Gastrocnemius medialis (tissue), 4 donors: ENCODE measurements at regions of chr1 and their contacts with region 1.

Region 1: DNA sequence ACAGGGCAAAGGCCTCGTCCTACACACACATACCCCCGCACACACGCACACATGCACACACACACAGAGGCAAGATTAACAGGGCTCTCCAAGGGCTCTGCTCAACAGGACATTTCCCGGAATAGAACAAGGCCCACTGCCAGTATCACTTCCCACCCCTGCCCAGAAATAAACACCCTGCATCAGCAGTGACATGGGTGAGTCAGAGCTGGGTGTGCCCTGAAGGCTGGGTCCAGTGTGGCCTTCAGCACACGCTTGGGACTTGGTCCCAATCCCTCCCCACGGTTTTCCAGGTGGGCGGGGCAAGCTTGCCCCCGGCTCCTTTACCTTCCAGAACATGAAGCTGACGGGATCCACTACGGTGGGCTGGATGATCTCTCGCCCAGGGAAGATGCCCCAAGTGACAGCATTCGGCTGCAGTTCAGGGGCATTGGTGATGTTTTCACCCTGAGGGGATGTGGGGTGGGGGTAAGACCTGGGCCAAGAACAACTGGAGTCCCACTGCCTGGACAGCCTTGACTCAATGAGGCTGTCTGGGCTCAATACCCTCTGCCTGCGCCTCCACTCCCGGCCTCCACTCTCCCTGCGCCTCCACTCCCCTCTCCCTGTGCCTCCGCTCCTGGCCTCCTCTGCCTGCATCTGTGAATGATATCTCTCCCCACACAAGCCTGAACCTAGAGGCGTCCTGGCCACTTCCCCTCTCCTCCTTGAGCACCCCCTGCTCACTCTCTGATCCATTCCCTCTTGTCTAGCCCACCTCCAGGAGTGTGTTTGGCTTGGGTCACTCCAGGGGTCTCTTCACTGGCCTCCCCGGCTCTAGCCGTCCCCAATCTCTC is 14.7 kb downstream of the MTHFR start:
- DNase-seq: peak; percentile 97 to 98
- ATAC-seq: peak; percentile 83 to 96
- H3K4me3 ChIP-seq: peak overlapping the region; percentile 7 to 43 (median 12)
- H3K27ac ChIP-seq: peak overlapping the region; percentile 90 to 99 (median 97)
- H3K4me1 ChIP-seq: peaks cover 65 to 76% of the 10 kb centered on the region in 2 donors
- H3K27me3 ChIP-seq: no peaks in the 10 kb centered on the region
- CTCF ChIP-seq: no peak
- POLR2A ChIP-seq: peak; percentile 75 to 85

Region 2: GRCh38 chr1:11805447-11806306 is 14.6 kb after region 1 on chr1 and contains the starts of genes CLCN6 and MTHFR:
- in situ Hi-C with region 1: no loop called
- intact Hi-C with region 1: loop called (anchors 1 kb)
- DNase-seq: peak; percentile 100
- ATAC-seq: peak; percentile 72 to 73
- H3K4me3 ChIP-seq: peak within 1 kb of the TSS; percentile 82 to 95 (median 86)
- H3K27ac ChIP-seq: peak within 1 kb of the TSS; percentile 92 to 99 (median 96)
- H3K4me1 ChIP-seq: peaks cover 57 to 63% of the 10 kb centered on the region in 2 donors
- H3K27me3 ChIP-seq: no peaks in the 10 kb centered on the region
- CTCF ChIP-seq: peak in 1 of 5 experiments; percentile 55
- POLR2A ChIP-seq: peak; percentile 96 to 98
- total RNA-seq, gene CLCN6: 7.1 to 11.9 (median 9.5) TPM
- total RNA-seq, gene MTHFR: 10.2 to 24.7 (median 18.1) TPM

Region 3: DNA sequence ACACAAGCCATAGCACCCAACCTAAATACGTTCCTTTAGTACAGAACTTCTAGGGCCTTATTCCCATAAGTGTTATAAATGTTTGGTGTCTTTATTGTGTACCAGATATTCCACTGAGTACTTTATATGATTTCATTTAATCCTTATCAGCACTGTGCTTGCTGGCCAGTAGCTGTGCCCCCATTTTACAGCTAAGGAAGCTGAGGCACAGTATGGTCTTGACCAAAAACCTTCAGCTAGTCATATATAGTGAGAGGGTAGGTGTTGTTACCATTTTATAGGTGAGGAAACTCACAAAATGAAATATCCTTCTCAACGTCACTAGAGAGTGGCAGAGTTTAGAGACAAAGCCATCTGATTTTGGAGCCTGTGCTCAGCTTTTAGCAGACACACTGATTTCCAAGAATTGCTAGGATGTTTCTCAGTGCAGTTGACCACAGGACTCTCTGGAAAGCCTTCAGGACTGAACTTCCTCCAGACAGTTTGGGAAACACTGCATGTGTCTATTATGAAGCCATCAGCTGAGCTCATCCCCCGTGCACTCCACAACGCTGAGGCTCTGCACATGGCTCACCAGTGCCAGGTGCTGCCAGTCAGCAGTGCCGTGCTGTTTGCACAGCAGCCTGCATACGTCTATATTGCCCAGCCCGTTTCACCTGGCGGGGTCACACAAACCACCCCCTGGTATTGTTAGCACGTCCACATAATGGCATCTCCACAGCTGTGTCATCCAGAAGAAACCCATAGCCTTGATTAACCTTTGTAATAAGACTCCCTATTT is 41.0 kb after region 1 on chr1:
- in situ Hi-C with region 1: no loop called
- intact Hi-C with region 1: loop called (anchors 1 kb)
- DNase-seq: no peak
- ATAC-seq: no peak
- H3K4me3 ChIP-seq: no peak overlapping the region
- H3K27ac ChIP-seq: peak overlapping the region in 1 of 4 donors; percentile 63
- H3K4me1 ChIP-seq: no peaks in the 10 kb centered on the region
- H3K27me3 ChIP-seq: no peaks in the 10 kb centered on the region
- CTCF ChIP-seq: no peak
- POLR2A ChIP-seq: no peak

Region 4: GRCh38 chr1:11893907-11894251 is 102.8 kb after region 1 on chr1:
- in situ Hi-C with region 1: no loop called
- intact Hi-C with region 1: loop called (anchors 2 kb)
- DNase-seq: peak in 1 of 2 donors; percentile 48
- ATAC-seq: peak; percentile 87 to 90
- H3K4me3 ChIP-seq: no peak overlapping the region
- H3K27ac ChIP-seq: no peak overlapping the region
- H3K4me1 ChIP-seq: no peaks in the 10 kb centered on the region
- H3K27me3 ChIP-seq: peaks cover 13 to 21% (median 20%) of the 10 kb centered on the region in 3 donors
- CTCF ChIP-seq: peak; percentile 88 to 94 (median 91)
- POLR2A ChIP-seq: no peak

Region 5: GRCh38 chr1:11907275-11908094 is 116.4 kb after region 1 on chr1:
- in situ Hi-C with region 1: no loop called
- intact Hi-C with region 1: loop called (anchors 2 kb)
- DNase-seq: peak; percentile 84 to 94
- ATAC-seq: peak; percentile 72 to 74
- H3K4me3 ChIP-seq: peak overlapping the region in 2 of 4 donors; percentile 86 to 93
- H3K27ac ChIP-seq: peak overlapping the region; percentile 95 to 99 (median 98)
- H3K4me1 ChIP-seq: no peaks in the 10 kb centered on the region
- H3K27me3 ChIP-seq: no peaks in the 10 kb centered on the region
- CTCF ChIP-seq: peak; percentile 78 to 93 (median 87)
- POLR2A ChIP-seq: no peak